Lower leg skin (tissue), 4 donors: ENCODE measurements at regions of chr13 and their contacts with region 1.

Region 1: DNA sequence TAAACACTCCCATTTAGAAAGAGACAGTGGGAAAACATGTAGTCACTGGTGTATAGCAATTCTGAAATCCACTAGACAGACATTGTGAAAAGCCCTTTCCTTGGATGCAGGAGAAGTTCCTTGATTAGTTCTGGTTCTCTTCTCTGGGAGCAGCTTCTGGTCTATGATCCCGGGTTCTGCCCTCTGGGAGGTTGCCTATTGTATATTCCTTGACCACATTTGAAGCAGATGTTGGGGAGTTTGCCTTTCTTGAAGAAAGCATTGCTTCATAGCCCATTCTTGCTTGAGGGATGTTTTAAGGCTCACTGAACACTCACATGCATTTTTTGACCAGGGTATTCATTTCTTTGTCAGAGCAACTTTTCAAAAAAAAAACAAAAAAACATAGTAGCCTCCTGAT is 211.9 kb downstream of the NDFIP2 start:
- DNase-seq: no peak
- H3K4me3 ChIP-seq: no peak overlapping the region
- CTCF ChIP-seq: no peak
- POLR2A ChIP-seq: no peak

Region 2: GRCh38 chr13:78909276-78909675 is 783.6 kb before region 1 on chr13:
- intact Hi-C with region 1: loop called (anchors 5 kb)
- DNase-seq: no peak
- H3K4me3 ChIP-seq: no peak overlapping the region
- CTCF ChIP-seq: no peak
- POLR2A ChIP-seq: no peak

Region 3: GRCh38 chr13:79880818-79881217 is 188.0 kb after region 1 on chr13:
- intact Hi-C with region 1: no loop called
- DNase-seq: no peak
- H3K4me3 ChIP-seq: no peak overlapping the region
- CTCF ChIP-seq: no peak
- POLR2A ChIP-seq: no peak